Mammary epithelial cell (primary cell): ENCODE measurements at regions of chr13 and their contacts with region 1.

Region 1: DNA sequence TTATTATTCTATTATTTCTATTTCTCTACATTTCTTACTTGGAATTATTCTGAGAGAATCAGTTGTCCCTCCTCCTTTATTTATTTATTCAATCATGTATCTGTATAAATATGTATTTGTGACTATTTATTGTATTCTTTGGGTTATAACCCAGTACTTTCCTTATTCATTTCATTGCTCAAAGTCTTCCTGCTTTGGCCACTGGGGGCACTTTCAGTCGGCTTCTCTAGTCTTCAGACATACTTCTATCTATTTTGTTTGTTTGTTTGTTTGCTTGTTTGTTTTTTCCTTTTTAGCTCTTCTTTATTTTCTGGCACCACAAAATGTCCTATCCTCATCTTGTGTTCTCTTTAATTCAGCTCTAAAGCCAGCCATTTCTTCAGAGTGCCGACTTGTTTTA is 260.4 kb downstream of the NALCN start:
- DNase-seq: no peak
- H3K4me3 ChIP-seq: no peak overlapping the region
- H3K27ac ChIP-seq: no peak overlapping the region
- H3K4me1 ChIP-seq: no peaks in the 10 kb centered on the region
- H3K27me3 ChIP-seq: no peaks in the 10 kb centered on the region
- CTCF ChIP-seq: peak; percentile 41 to 44

Region 2: GRCh38 chr13:101211261-101211660 is 55.3 kb after region 1 on chr13:
- CTCF ChIA-PET with region 1: no interaction called
- dilution Hi-C with region 1: no loop called
- in situ Hi-C with region 1: no loop called
- intact Hi-C with region 1: no loop called
- DNase-seq: peak; percentile 58
- H3K4me3 ChIP-seq: no peak overlapping the region
- H3K27ac ChIP-seq: peak overlapping the region; percentile 4
- H3K4me1 ChIP-seq: peaks cover 24% of the 10 kb centered on the region
- H3K27me3 ChIP-seq: no peaks in the 10 kb centered on the region
- CTCF ChIP-seq: no peak

Region 3: DNA sequence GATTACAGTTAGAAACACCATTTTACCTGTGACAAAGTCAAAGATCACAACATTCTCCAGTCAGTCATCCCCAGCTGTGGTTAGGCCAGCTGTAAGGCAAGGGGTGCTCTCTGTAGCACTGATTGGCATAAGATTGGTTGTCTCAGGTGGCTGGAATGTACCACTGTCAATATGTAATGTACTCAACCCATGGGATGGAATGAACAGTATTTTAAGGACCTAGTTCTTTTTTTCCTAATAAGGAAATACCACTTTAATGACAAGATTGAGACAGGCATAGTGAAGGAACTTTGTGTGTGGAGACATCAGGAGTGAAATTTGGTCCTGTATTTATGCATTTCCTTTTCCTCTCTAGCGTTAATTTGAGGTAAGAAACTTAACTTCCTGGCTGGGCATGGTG is 607.3 kb after region 1 on chr13:
- CTCF ChIA-PET with region 1: no interaction called
- dilution Hi-C with region 1: loop called (anchors 5 kb)
- in situ Hi-C with region 1: no loop called
- intact Hi-C with region 1: no loop called
- DNase-seq: peak; percentile 6
- H3K4me3 ChIP-seq: no peak overlapping the region
- H3K27ac ChIP-seq: no peak overlapping the region
- H3K4me1 ChIP-seq: no peaks in the 10 kb centered on the region
- H3K27me3 ChIP-seq: peaks cover 4% of the 10 kb centered on the region
- CTCF ChIP-seq: no peak